Cardiac septum (tissue), 1 donor: ENCODE measurements at regions of chr4 and their contacts with region 1.

Region 1: DNA sequence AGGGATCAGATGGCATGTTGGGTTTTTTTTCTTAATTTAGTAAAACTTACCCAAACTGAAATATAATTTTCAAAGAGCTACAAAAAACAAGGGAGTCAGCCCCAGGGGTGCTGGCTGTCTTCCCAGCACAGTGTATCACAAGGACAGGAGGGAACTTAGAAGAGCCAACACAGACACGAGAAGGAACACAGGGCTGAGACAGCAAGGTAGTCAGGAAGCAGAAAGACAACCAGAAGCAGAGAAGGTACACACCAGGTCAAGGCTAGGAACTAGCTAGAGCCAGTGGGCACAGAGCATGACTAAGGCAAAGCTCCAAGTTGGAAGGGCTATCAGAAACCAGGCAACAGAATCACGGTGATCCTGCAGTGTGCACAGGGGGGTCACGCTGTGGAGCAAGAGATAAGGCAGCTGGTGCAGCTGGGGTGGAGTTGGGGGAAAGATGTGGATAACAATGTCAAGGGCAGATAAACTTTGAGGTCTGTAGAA is 168.7 kb downstream of the NR3C2 start:
- DNase-seq: peak; percentile 75

Region 2: GRCh38 chr4:148065075-148065474 is 208.5 kb before region 1 on chr4:
- intact Hi-C with region 1: loop called (anchors 5 kb)
- DNase-seq: no peak

Region 3: DNA sequence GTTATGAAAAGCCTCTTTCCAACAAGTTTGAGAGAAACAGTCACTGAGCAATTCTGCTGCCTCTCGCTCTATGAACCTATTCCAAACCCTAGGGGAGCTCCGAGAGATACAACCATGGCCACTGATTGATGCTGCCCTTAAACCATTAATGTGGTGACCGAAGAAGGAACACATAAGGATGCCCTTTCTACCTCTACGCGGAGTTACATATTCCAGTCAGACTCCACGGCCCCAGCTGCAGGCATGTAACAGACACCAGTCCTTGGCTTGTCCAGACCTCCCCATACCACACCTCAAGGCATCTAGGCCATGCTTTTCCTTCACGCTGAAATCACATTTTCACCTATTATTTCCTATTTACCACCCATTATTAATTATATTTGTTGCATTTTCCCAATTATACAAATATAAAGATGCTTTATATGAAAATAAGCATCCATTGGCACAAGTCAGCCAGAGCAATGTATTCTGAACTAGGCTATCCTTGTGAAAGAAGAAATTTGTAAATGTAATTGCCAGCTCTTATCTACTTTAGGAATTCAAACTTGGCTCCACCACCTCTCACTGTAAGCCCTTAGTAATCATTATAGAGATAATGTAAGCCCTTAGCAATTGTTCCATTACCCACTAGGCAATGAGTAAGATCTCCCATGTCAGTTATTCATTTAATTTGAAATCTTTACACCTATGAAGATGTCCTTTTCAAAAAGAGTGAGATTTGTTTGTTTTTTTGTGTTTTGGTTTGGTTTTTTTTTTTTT is 169.8 kb before region 1 on chr4:
- intact Hi-C with region 1: no loop called
- DNase-seq: no peak